WTC11 (cell line): ENCODE measurements at regions of chr19 and their contacts with region 1.

Region 1: GRCh38 chr19:3710265-3710812 is 2.2 kb downstream of the TJP3 start:
- DNase-seq: peak; percentile 45
- ATAC-seq: peak; percentile 65
- H3K4me3 Mint-ChIP-seq: no peak overlapping the region
- H3K27ac Mint-ChIP-seq: peak overlapping the region; percentile 51; the same call in 1 of the 2 replicates
- H3K4me1 Mint-ChIP-seq: peaks cover 18% of the 10 kb centered on the region
- H3K27me3 Mint-ChIP-seq: no peaks in the 10 kb centered on the region
- CTCF ChIP-seq: no peak

Region 2: GRCh38 chr19:3505598-3506383 is 204.5 kb before region 1 on chr19 and contains the start of gene FZR1:
- CTCF ChIA-PET with region 1: no interaction called
- POLR2A ChIA-PET with region 1: no interaction called
- DNase-seq: peak; percentile 97
- ATAC-seq: peak; percentile 84
- H3K4me3 Mint-ChIP-seq: peak within 1 kb of the TSS; percentile 88
- H3K27ac Mint-ChIP-seq: peak within 1 kb of the TSS; percentile 99
- H3K4me1 Mint-ChIP-seq: peaks cover 21% of the 10 kb centered on the region
- H3K27me3 Mint-ChIP-seq: no peaks in the 10 kb centered on the region; the same call in 1 of the 2 replicates
- CTCF ChIP-seq: no peak
- total RNA-seq, gene FZR1: 43.6 to 60.8 TPM (median 44.4 TPM) in 3 replicates

Region 3: GRCh38 chr19:3586124-3586626 is 124.2 kb before region 1 on chr19:
- CTCF ChIA-PET with region 1: no interaction called
- POLR2A ChIA-PET with region 1: no interaction called
- DNase-seq: peak; percentile 77
- ATAC-seq: peak; percentile 76
- H3K4me3 Mint-ChIP-seq: peak overlapping the region; percentile 49
- H3K27ac Mint-ChIP-seq: no peak overlapping the region
- H3K4me1 Mint-ChIP-seq: no peaks in the 10 kb centered on the region
- H3K27me3 Mint-ChIP-seq: peaks cover 52% of the 10 kb centered on the region
- CTCF ChIP-seq: peak; percentile 62; the same call in 1 of the 2 replicates

Region 4: GRCh38 chr19:3721131-3721886 is 11.0 kb after region 1 on chr19:
- CTCF ChIA-PET with region 1: interaction called, 65 read pairs
- POLR2A ChIA-PET with region 1: interaction called, 11 read pairs
- DNase-seq: peak; percentile 99
- ATAC-seq: peak; percentile 69
- H3K4me3 Mint-ChIP-seq: peak overlapping the region; percentile 83
- H3K27ac Mint-ChIP-seq: no peak overlapping the region
- H3K4me1 Mint-ChIP-seq: peaks cover 16% of the 10 kb centered on the region
- H3K27me3 Mint-ChIP-seq: no peaks in the 10 kb centered on the region
- CTCF ChIP-seq: no peak

Region 5: DNA sequence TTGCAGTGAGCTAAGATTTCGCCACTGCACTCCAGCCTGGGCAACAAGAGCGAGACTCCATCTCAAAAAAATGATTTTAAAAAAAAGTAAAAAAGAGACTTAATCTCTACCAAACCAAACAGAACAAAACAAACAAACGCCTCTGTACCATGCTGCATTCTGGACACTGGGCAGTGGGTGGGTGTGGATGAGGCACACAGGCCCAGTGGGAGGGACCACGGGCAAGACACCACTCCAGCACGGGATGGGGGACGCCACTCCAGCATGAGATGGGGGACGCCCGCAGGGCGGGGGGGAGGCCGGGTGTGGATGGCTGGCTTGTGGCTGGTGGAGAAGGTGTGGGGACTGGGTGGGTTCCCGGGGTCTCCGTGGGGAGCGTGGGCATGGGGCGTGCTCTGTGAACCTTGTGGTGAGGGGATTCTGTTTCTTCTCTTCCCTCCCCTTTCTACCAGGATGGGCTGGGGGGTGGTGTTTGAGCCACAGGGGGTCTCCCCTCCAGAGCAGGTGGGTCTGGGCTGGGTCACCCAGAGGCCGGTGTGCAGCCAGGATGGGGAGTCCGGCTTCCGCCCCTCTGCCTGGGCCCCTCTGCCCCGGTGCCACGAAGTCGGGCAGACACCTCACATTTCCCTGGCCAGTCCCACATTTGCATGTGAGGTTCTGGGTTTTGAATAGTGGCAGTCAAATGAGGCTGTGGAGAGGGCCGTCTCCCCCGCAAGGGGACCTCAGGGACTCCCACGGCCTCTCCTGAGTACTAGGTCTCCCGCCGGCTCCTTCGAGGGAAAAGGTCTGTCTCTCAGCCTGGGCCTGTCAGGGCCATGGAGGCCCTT is 99.8 kb after region 1 on chr19:
- CTCF ChIA-PET with region 1: no interaction called
- POLR2A ChIA-PET with region 1: no interaction called
- DNase-seq: no peak
- ATAC-seq: no peak
- H3K4me3 Mint-ChIP-seq: no peak overlapping the region
- H3K27ac Mint-ChIP-seq: no peak overlapping the region
- H3K4me1 Mint-ChIP-seq: no peaks in the 10 kb centered on the region
- H3K27me3 Mint-ChIP-seq: no peaks in the 10 kb centered on the region
- CTCF ChIP-seq: no peak